ENCODE measurements at regions of chr11 and their contacts with region 1.

Region 1: DNA sequence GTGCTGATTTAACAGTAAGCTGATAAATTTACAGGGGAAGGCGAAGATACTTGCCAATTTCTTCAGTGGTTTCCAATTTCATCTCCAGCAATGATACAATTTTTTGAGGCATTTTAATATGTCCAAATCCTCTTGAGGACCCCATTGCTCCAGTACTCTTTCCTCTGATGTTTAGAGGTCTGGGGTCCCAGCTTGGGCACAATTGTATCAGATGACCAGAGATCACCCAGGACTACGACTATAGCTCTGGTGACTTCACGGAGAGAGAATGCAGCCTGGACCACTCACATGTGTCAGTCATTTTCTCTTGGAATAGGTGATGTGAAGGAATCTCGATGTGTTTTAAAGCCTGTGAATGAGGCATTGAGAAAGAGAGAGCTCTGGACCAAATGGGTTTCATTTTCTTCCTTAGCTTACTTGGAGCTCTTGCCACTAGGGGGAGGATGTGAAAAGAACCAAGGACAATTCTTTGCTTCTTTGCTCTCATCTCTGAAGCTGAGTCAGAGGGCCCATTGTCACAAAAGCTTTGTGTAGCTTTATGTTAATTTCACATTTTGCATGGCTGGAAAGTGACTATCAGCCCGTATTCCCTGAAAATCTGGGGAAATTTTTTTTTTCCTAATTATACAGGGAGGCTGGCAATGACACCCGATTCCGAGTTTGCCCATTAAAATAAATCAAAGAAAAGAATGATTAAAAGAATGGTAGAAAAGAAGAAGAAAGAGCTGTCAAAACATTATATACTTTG is 6.7 kb upstream of the CCDC90B start:
- DNase-seq: no peak
- H3K4me3 ChIP-seq: peak overlapping the region in 1 of 4 donors; percentile 6
- H3K27ac ChIP-seq: no peak overlapping the region
- H3K4me1 ChIP-seq: peaks cover 0 to 3% (median 0%) of the 10 kb centered on the region in 4 donors
- H3K27me3 ChIP-seq: no peaks in the 10 kb centered on the region
- CTCF ChIP-seq: peak; percentile 53 to 70 (median 56)
- EP300 ChIP-seq: no peak
- POLR2A ChIP-seq: no peak

Region 2: GRCh38 chr11:83364500-83365059 is 71.7 kb after region 1 on chr11:
- intact Hi-C with region 1: no loop called
- DNase-seq: no peak
- H3K4me3 ChIP-seq: no peak overlapping the region
- H3K27ac ChIP-seq: no peak overlapping the region
- H3K4me1 ChIP-seq: no peaks in the 10 kb centered on the region
- H3K27me3 ChIP-seq: no peaks in the 10 kb centered on the region
- CTCF ChIP-seq: no peak
- EP300 ChIP-seq: no peak
- POLR2A ChIP-seq: no peak

Region 3: GRCh38 chr11:83724008-83724461 is 431.2 kb after region 1 on chr11:
- intact Hi-C with region 1: loop called (anchors 5 kb)
- DNase-seq: no peak
- H3K4me3 ChIP-seq: peak overlapping the region; percentile 39 to 54 (median 43)
- H3K27ac ChIP-seq: peak overlapping the region in 2 of 4 donors; percentile 17 to 56
- H3K4me1 ChIP-seq: peaks cover 10 to 23% (median 21%) of the 10 kb centered on the region in 4 donors
- H3K27me3 ChIP-seq: no peaks in the 10 kb centered on the region
- CTCF ChIP-seq: peak; percentile 29 to 50 (median 31)
- EP300 ChIP-seq: no peak
- POLR2A ChIP-seq: no peak

Region 4: DNA sequence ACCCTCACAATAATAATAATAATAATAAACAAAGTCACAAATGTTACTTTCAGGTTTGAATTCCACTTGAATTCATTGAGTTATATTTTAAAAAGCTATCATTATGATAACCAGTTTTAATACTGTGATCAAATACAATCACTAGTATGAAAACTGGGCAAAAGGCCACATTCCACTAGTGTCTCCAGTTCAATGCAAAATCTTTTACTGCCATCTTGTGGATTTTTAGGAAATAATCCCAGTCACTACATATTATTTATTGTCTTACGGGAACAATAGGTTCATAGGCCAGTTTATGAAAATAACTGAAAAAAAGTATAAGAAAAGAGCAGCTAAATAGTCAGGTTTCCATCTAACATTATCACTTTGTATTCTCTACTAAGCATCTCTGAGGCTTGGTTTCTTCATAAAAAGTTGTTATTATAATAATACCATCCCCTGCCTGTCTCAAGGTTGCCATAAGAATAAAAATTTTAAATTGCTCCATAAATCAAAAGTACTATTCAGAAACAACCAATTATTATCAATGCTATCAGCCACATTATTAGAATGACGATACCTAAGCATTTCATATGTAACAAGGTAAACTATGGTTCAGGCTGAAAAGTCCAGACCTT is 527.2 kb after region 1 on chr11:
- intact Hi-C with region 1: loop called (anchors 5 kb)
- DNase-seq: no peak
- H3K4me3 ChIP-seq: no peak overlapping the region
- H3K27ac ChIP-seq: no peak overlapping the region
- H3K4me1 ChIP-seq: peaks cover 0 to 7% (median 0%) of the 10 kb centered on the region in 4 donors
- H3K27me3 ChIP-seq: no peaks in the 10 kb centered on the region
- CTCF ChIP-seq: peak; percentile 63 to 68 (median 68)
- EP300 ChIP-seq: no peak
- POLR2A ChIP-seq: no peak

Measured in esophagus muscularis mucosa (tissue), 4 donors.